Dorsolateral prefrontal cortex (tissue), 120 donors: ENCODE measurements at regions of chr11 and their contacts with region 1.

Region 1: GRCh38 chr11:68383976-68384501 is 71.6 kb downstream of the LRP5 start:
- DNase-seq: peak in 8 of 10 donors; percentile 41 to 70 (median 63)
- H3K4me3 ChIP-seq: no peak overlapping the region
- H3K27ac ChIP-seq: no peak overlapping the region
- H3K27me3 ChIP-seq: no peaks in the 10 kb centered on the region
- CTCF ChIP-seq: peak; percentile 66 to 98 (median 89)

Region 2: DNA sequence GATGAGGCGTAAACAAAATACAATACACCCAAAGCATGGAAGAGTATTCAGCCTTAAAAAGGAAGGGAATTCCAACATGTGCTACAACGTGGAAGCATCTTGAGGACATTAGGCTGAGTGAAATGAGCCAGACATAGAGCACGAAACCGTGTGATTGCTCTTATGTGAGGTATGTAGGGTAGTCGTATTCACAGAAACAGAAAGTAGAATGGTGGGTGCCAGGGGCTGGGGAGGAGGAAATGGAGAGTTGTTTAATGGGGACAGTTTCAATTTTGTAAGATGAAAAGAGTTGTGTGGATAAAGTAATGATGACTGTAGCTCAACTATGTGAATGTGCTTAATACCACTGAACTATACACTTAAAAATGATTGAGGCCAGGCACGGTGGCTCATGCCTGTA is 160.8 kb before region 1 on chr11:
- intact Hi-C with region 1: no loop called
- DNase-seq: no peak
- H3K4me3 ChIP-seq: no peak overlapping the region
- H3K27ac ChIP-seq: no peak overlapping the region
- H3K27me3 ChIP-seq: no peaks in the 10 kb centered on the region
- CTCF ChIP-seq: no peak

Region 3: DNA sequence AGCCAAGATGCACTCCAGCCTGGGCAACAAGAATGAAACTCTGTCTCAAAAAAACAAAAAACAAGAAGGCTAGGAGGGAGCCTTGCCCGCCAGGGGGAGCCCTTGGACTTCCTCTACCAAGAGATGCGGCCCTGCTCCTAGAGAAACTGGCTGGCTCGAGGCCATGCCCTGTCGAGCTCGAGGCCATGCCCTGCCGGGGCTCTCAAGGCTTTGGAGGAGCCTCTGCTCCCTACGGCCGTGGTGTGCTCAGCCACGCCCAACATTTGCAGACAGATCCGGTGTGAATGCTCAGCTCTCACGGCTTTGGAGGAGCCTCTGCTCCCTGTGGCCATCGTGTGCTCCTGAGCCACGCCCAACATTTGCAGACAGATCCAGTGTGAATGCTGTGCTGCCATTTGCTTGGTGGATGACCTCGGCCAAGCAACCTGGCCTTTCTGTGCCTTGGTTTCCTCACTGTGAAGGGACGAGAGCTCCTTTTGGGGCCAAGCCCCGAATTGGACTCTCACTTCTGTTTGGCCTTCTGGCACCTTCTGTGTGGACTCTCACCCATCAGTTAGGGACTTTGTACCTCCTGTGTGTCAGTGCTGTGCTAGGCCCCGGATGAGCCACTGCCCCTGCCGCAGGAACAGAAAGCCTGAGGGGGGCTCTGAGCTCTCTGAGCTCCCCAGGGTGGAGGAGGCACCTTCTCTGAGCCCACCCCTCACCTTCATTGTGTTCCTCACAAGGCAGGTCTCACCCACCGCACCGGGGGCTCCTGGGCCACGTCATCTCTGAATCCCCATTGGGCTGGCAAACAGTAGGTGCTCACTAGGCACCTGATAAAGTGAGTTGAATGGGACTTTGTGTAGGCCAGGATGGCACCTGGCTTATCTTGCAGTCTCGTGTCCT is 126.3 kb before region 1 on chr11:
- intact Hi-C with region 1: loop called (anchors 1 to 5 kb)
- DNase-seq: peak; percentile 91 to 99 (median 97)
- H3K4me3 ChIP-seq: peak overlapping the region in 33 of 59 donors; percentile 2 to 57 (median 23)
- H3K27ac ChIP-seq: peak overlapping the region in 50 of 59 donors; percentile 0 to 85 (median 56)
- H3K27me3 ChIP-seq: no peaks in the 10 kb centered on the region
- CTCF ChIP-seq: peak; percentile 81 to 99 (median 93)

Region 4: GRCh38 chr11:68297812-68298658 is 86.0 kb before region 1 on chr11:
- intact Hi-C with region 1: loop called in 1 of 2 experiments (anchors 5 kb)
- DNase-seq: peak; percentile 58 to 89 (median 65)
- H3K4me3 ChIP-seq: peak overlapping the region in 36 of 59 donors; percentile 5 to 51 (median 28)
- H3K27ac ChIP-seq: peak overlapping the region in 1 of 59 donors; percentile 13
- H3K27me3 ChIP-seq: no peaks in the 10 kb centered on the region
- CTCF ChIP-seq: peak; percentile 85 to 99 (median 97)

Region 5: DNA sequence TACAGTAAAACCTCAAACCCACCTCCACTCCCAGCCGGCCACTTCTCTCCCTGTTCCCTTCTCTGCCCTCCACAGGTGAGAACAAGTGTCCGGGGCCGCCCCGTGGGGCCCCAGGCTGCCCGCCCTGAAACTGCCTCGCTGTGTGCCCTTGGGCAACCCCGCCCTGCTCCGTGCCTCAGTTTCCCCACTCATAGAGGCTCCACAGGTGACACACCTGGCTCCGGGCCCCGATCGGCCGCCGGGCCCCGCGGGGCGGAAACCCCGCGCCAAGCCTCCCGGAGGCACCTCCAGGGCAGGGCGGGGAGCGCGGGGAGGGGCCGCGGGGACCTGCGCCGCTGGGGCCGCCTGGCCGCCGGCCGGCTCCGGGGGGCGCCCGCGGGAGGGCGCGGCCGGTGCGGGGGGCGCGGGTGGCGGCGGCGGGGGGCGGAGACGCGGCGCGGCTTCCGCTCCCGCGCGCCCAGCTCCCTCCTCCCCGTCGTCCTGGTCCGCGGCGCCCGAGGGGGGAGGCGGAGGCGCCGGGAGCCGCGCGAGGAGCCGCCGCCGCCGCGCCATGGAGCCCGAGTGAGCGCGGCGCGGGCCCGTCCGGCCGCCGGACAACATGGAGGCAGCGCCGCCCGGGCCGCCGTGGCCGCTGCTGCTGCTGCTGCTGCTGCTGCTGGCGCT is 71.8 kb before region 1 on chr11 and contains the start of gene LRP5:
- intact Hi-C with region 1: loop called (anchors 5 to 10 kb)
- DNase-seq: no peak
- H3K4me3 ChIP-seq: peak within 1 kb of the TSS; percentile 26 to 74 (median 57)
- H3K27ac ChIP-seq: peak within 1 kb of the TSS in 5 of 59 donors; percentile 24 to 61 (median 26)
- H3K27me3 ChIP-seq: peaks cover 0 to 4% (median 0%) of the 10 kb centered on the region in 45 donors
- CTCF ChIP-seq: no peak
- total RNA-seq, gene LRP5: 4.5 to 21.7 (median 9.2) TPM

Region 6: GRCh38 chr11:68328374-68329091 is 55.5 kb before region 1 on chr11:
- intact Hi-C with region 1: loop called in 1 of 2 experiments (anchors 5 kb)
- DNase-seq: peak in 7 of 10 donors; percentile 52 to 69 (median 62)
- H3K4me3 ChIP-seq: peak overlapping the region in 37 of 59 donors; percentile 1 to 54 (median 24)
- H3K27ac ChIP-seq: peak overlapping the region; percentile 40 to 94 (median 85)
- H3K27me3 ChIP-seq: peaks cover 0 to 5% (median 0%) of the 10 kb centered on the region in 45 donors
- CTCF ChIP-seq: peak in 9 of 56 donors; percentile 8 to 21 (median 14)

Region 7: GRCh38 chr11:68430801-68431200 is 46.8 kb after region 1 on chr11:
- intact Hi-C with region 1: no loop called
- DNase-seq: no peak
- H3K4me3 ChIP-seq: no peak overlapping the region
- H3K27ac ChIP-seq: no peak overlapping the region
- H3K27me3 ChIP-seq: no peaks in the 10 kb centered on the region
- CTCF ChIP-seq: no peak

Region 8: DNA sequence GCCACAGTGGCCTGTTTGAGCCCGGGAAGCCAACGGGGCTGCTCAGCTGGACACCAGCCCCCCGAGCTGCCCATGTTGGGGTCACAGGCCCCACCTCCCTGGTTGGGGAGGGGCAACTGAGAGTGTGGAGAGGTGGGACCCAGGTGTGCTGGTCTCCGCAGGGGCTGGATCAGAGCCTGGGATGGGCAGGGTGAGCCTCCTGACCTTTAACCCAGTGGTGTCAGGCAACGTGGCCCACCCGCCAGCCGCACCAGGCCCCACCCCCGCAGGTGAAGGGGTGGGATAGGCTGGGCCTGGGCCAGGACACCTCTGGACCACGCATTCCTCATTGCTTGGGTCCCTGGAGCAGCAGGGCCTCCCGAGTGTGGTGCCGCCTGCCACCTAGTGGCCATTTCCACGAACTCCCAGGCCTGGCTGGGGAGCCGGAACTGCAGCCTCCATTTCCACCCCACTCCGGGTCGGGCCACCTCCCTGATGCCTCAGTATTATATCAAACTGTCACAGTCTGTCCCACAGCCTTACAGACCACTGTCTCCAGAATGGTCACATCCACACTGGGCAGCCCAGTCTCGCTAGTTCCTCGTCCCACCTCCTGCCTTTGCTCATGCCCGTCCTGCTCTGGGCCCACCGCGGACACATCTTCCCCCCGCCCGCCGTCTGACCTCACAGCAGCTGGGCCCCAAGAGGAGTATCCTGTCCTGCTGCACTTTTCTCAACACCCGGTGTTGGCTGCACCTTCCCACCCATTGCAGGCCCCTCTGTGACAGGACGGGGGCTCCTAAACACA is 63.2 kb after region 1 on chr11:
- intact Hi-C with region 1: loop called in 1 of 2 experiments (anchors 5 kb)
- DNase-seq: peak; percentile 65 to 88 (median 74)
- H3K4me3 ChIP-seq: no peak overlapping the region
- H3K27ac ChIP-seq: no peak overlapping the region
- H3K27me3 ChIP-seq: no peaks in the 10 kb centered on the region
- CTCF ChIP-seq: peak; percentile 72 to 98 (median 93)